Activated CD8-positive, alpha-beta T cell treated with anti-CD3 and anti-CD28 coated beads, Interleukin-2, amount 10 ng/mL, durations not matched to agents 7 days and 5 days (primary cell): ENCODE measurements at regions of chr17 and their contacts with region 1.

Region 1: GRCh38 chr17:76278952-76279741 is 14.0 kb downstream of the UBALD2 start:
- DNase-seq: peak; percentile 89
- ATAC-seq: peak; percentile 82
- H3K4me3 Mint-ChIP-seq: no peak overlapping the region
- H3K27ac Mint-ChIP-seq: peak overlapping the region; percentile 61
- H3K4me1 Mint-ChIP-seq: peaks cover 23% of the 10 kb centered on the region
- H3K27me3 Mint-ChIP-seq: no peaks in the 10 kb centered on the region

Region 2: GRCh38 chr17:76014184-76014924 is 264.8 kb before region 1 on chr17:
- CTCF ChIA-PET with region 1: interaction called, 21 read pairs
- POLR2A ChIA-PET with region 1: interaction called, 4 read pairs
- DNase-seq: peak; percentile 84
- ATAC-seq: peak; percentile 99
- H3K4me3 Mint-ChIP-seq: no peak overlapping the region
- H3K27ac Mint-ChIP-seq: no peak overlapping the region
- H3K4me1 Mint-ChIP-seq: peaks cover 8% of the 10 kb centered on the region
- H3K27me3 Mint-ChIP-seq: no peaks in the 10 kb centered on the region

Region 3: DNA sequence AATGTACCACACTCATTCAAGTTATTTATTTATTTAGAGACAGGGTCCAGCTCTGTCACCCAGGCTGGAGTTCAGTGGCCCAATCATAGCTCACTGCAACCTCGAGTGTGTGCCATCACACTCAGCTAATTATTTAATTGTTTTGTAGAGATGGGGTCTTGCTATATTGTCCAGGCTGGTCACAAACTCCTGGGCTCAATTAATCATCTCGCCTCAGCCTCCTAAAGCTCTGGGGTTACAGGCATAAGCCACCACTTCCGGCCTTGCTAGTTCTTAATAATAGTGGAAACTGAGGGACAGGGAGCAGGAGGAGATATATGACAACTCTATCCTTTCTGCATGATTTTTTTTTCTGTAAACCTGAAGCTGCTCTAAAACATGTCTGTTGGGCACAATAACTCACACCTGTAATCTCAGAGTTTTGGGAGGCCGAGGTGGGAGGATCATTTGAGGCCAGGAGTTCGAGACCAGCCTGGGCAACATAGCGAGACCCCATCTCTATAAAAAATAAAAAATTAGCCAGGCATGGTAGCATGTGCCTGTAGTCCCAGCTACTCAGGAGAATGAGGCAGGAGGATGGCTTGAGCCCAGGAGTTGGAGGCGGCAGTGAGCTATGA is 163.9 kb before region 1 on chr17:
- CTCF ChIA-PET with region 1: interaction called, 222 read pairs
- POLR2A ChIA-PET with region 1: interaction called, 163 read pairs
- DNase-seq: no peak
- ATAC-seq: no peak
- H3K4me3 Mint-ChIP-seq: no peak overlapping the region
- H3K27ac Mint-ChIP-seq: no peak overlapping the region
- H3K4me1 Mint-ChIP-seq: no peaks in the 10 kb centered on the region
- H3K27me3 Mint-ChIP-seq: peaks cover 4% of the 10 kb centered on the region

Region 4: GRCh38 chr17:76132574-76133338 is 146.4 kb before region 1 on chr17:
- CTCF ChIA-PET with region 1: interaction called, 222 read pairs
- POLR2A ChIA-PET with region 1: interaction called, 163 read pairs
- DNase-seq: no peak
- ATAC-seq: no peak
- H3K4me3 Mint-ChIP-seq: no peak overlapping the region
- H3K27ac Mint-ChIP-seq: no peak overlapping the region
- H3K4me1 Mint-ChIP-seq: peaks cover 37% of the 10 kb centered on the region
- H3K27me3 Mint-ChIP-seq: no peaks in the 10 kb centered on the region

Region 5: GRCh38 chr17:76182016-76182764 is 97.0 kb before region 1 on chr17:
- CTCF ChIA-PET with region 1: interaction called, 112 read pairs
- POLR2A ChIA-PET with region 1: interaction called, 722 read pairs
- DNase-seq: peak; percentile 97
- ATAC-seq: peak; percentile 87
- H3K4me3 Mint-ChIP-seq: no peak overlapping the region
- H3K27ac Mint-ChIP-seq: peak overlapping the region; percentile 87
- H3K4me1 Mint-ChIP-seq: peaks cover 72% of the 10 kb centered on the region
- H3K27me3 Mint-ChIP-seq: no peaks in the 10 kb centered on the region

Region 6: GRCh38 chr17:76240461-76241203 is 38.5 kb before region 1 on chr17 and contains the start of gene RNF157:
- CTCF ChIA-PET with region 1: interaction called, 22 read pairs
- POLR2A ChIA-PET with region 1: interaction called, 807 read pairs
- DNase-seq: peak; percentile 66
- ATAC-seq: peak; percentile 90
- H3K4me3 Mint-ChIP-seq: peak within 1 kb of the TSS; percentile 90
- H3K27ac Mint-ChIP-seq: peak within 1 kb of the TSS; percentile 86
- H3K4me1 Mint-ChIP-seq: peaks cover 79% of the 10 kb centered on the region
- H3K27me3 Mint-ChIP-seq: no peaks in the 10 kb centered on the region
- total RNA-seq, gene RNF157: 150 to 165 TPM

Region 7: GRCh38 chr17:76264755-76265596 is 14.2 kb before region 1 on chr17 and contains the start of gene UBALD2:
- CTCF ChIA-PET with region 1: interaction called, 27 read pairs
- POLR2A ChIA-PET with region 1: interaction called, 73 read pairs
- DNase-seq: peak; percentile 100
- ATAC-seq: peak; percentile 84
- H3K4me3 Mint-ChIP-seq: peak within 1 kb of the TSS; percentile 95
- H3K27ac Mint-ChIP-seq: peak within 1 kb of the TSS; percentile 99
- H3K4me1 Mint-ChIP-seq: peaks cover 58% of the 10 kb centered on the region
- H3K27me3 Mint-ChIP-seq: no peaks in the 10 kb centered on the region
- total RNA-seq, gene UBALD2: 318 to 359 TPM

Region 8: DNA sequence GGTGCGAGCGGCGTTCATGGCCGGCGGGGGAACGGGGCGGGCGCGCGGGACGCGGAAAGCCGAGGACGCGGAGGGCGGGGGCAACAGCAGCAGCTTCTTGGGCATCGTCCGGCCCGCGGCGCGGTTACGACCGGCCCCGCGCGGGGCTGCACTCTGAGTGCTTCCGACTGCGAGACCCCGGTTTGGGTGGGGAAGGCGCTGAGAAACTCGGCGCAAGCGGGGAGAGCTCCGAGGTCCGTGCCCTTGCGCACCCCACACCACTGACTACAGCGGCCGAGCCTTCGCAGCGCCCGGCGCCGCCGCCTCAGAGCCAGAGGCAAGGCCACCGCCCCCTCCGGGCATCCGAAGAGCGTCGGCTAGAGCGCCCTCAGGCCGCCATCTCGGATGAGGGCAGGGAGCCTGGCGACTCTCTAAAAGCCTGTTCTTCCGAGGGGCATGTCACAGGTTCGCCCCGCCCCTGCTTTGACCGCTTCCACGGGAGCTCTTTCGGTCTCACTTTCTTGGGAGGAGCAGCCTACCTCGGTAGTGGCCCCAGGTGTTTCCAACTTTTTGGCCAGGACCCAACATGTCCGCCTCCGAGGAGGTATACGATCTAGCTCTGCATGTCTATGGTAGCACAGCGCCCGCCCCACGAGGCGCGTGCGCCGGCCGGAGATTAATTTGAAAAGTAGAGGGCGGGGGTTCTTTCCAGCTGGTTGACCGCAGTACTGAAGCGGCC is 74.6 kb after region 1 on chr17 and contains the start of gene PRPSAP1:
- CTCF ChIA-PET with region 1: no interaction called
- POLR2A ChIA-PET with region 1: no interaction called
- DNase-seq: peak; percentile 88
- ATAC-seq: peak; percentile 97
- H3K4me3 Mint-ChIP-seq: peak within 1 kb of the TSS; percentile 98
- H3K27ac Mint-ChIP-seq: peak within 1 kb of the TSS; percentile 100
- H3K4me1 Mint-ChIP-seq: peaks cover 28% of the 10 kb centered on the region
- H3K27me3 Mint-ChIP-seq: no peaks in the 10 kb centered on the region
- total RNA-seq, gene PRPSAP1: 64.2 to 74.1 TPM